ENCODE measurements at regions of chr1 and their contacts with region 1.

Region 1: DNA sequence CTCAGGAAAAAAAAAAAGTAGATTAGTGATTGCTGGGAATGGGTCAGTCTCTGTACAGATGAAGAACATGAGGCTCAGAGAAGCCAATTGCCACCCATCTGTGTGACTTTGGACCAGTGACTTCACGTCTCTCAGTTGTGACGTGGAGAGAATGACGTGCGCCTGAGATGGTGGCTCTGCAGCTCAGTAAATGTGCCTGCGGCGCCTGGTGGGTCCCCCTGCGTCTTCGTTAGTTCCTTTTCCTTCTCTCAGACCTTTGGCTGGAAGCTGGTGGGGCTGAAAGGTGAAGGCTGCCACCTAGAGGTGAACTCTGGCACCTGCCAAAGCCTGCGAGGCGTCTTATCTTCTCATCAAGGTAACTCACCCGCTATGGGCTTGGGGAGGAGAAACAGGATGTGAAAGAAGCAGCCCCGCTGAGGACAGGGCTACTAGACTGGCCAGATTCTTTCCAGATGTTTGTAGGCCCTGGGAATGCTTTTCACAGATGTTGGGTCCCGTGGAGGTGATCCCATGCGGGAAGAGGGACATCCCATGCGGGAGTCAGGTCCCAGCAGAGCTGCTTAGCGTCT is 8.7 kb upstream of the E2F2 start:
- DNase-seq: peak; percentile 84
- ATAC-seq: peak; percentile 92
- H3K4me3 Mint-ChIP-seq: peak overlapping the region; percentile 59
- H3K27ac Mint-ChIP-seq: peak overlapping the region; percentile 56
- H3K4me1 Mint-ChIP-seq: peaks cover 39% of the 10 kb centered on the region
- H3K27me3 Mint-ChIP-seq: no peaks in the 10 kb centered on the region
- CTCF ChIP-seq: peak; percentile 60

Region 2: DNA sequence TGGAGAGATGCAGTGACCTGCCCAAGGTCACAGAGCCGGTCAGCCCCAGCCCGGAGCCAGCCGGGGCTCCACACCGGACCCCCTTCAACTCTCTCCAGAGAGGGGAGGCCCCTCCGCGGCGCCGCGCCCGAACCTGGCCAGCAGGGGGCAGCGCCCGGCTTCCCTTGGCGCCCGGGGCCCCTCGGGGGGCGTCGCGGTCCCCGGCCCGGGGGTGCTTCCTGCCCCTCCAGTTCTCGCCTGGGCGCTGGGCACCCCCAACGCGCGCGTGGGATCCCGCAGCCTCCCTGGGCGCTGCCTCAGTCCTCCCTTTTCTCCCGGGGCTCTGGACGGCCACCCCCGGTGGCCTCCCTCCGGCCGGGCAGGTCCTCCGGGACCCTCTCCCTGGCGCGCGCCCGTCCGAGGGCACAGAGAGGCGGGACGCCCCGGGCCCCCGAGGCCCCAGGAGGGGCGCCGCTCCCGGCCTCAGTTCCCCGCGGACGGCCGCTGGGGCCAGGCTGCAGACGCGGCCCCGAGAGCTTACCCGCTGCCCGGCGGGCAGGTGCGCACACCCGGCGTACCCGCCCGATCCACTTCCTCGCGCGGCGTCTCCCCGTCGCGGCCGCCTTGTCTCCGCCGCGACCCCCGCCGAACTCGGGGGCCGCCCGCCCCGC is 322.9 kb before region 1 on chr1:
- CTCF ChIA-PET with region 1: no interaction called
- POLR2A ChIA-PET with region 1: no interaction called
- intact Hi-C with region 1: loop called (anchors 2 kb)
- DNase-seq: peak; percentile 41
- ATAC-seq: peak; percentile 21
- H3K4me3 Mint-ChIP-seq: no peak overlapping the region
- H3K27ac Mint-ChIP-seq: no peak overlapping the region
- H3K4me1 Mint-ChIP-seq: peaks cover 6% of the 10 kb centered on the region
- H3K27me3 Mint-ChIP-seq: peaks cover 66% of the 10 kb centered on the region
- CTCF ChIP-seq: no peak

Region 3: GRCh38 chr1:23367791-23368561 is 171.8 kb before region 1 on chr1:
- CTCF ChIA-PET with region 1: no interaction called
- POLR2A ChIA-PET with region 1: no interaction called
- intact Hi-C with region 1: loop called (anchors 2 kb)
- DNase-seq: peak; percentile 88
- ATAC-seq: peak; percentile 88
- H3K4me3 Mint-ChIP-seq: peak overlapping the region; percentile 97
- H3K27ac Mint-ChIP-seq: peak overlapping the region; percentile 97
- H3K4me1 Mint-ChIP-seq: peaks cover 26% of the 10 kb centered on the region
- H3K27me3 Mint-ChIP-seq: no peaks in the 10 kb centered on the region
- CTCF ChIP-seq: no peak

Region 4: GRCh38 chr1:23484253-23485001 is 55.4 kb before region 1 on chr1:
- CTCF ChIA-PET with region 1: interaction called, 3 read pairs
- POLR2A ChIA-PET with region 1: no interaction called
- intact Hi-C with region 1: loop called (anchors 1 kb)
- DNase-seq: peak; percentile 81
- ATAC-seq: peak; percentile 88
- H3K4me3 Mint-ChIP-seq: peak overlapping the region; percentile 91
- H3K27ac Mint-ChIP-seq: peak overlapping the region; percentile 75
- H3K4me1 Mint-ChIP-seq: peaks cover 33% of the 10 kb centered on the region
- H3K27me3 Mint-ChIP-seq: peaks cover 4% of the 10 kb centered on the region
- CTCF ChIP-seq: no peak

Region 5: DNA sequence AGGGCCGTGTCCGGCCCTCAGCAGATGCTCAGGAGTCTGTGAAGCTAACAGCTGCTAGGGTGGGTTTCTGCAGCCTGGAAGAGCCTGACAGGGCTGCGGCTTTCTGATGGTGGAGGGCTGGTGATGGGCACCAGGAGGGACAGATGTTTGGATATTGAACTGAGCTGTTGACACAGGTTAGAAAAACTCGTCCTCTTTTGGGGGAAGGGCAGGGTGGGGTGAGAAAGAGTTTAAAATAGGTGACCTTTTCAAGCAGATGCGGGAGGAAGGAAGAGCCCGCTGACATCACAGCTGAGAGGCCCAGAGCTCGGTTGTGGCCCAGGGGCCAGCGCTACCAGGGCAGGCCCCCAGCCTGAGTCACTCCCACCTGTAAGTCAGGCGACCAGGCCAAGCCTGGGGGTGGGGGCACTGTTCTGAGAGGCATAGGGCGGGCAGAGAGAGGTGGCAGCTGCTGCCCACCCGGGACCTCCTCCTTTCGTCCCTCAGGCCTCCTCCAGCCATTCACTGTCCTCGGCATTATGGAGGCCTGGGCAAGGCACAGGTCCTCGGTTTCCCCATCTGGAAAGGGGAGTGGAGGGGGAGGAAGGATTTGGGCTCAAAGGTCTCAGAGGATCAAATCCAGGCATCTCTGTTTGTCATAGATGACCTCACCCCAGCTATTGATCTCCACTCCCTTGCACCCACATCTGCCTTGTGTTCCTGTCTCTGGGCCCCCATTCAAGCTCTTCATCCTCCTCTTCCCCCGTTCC is 51.9 kb after region 1 on chr1:
- CTCF ChIA-PET with region 1: interaction called, 10 read pairs
- POLR2A ChIA-PET with region 1: interaction called, 7 read pairs
- intact Hi-C with region 1: no loop called
- DNase-seq: peak; percentile 67
- ATAC-seq: peak; percentile 80
- H3K4me3 Mint-ChIP-seq: peak overlapping the region; percentile 74
- H3K27ac Mint-ChIP-seq: peak overlapping the region; percentile 89
- H3K4me1 Mint-ChIP-seq: peaks cover 87% of the 10 kb centered on the region
- H3K27me3 Mint-ChIP-seq: no peaks in the 10 kb centered on the region
- CTCF ChIP-seq: no peak

Region 6: DNA sequence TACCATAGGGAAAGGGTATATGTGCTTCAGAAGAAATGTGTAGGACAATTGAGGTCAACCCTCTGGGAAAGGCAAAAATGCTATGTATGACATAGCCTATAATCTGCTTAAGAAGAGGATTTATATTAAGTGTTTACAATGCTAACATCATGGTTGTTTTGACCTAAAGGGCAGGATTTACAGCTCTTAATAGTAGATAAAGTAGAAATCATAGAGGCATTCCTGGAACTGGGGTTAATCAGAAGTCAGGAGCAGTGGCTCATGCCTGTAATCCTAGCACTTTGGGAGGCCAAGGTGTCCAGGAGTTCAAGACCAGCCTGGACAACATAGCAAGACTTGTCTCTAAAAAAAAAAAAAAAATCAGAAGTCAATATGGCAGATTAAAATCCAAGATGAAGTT is 143.2 kb after region 1 on chr1:
- CTCF ChIA-PET with region 1: no interaction called
- POLR2A ChIA-PET with region 1: no interaction called
- intact Hi-C with region 1: no loop called
- DNase-seq: no peak
- ATAC-seq: no peak
- H3K4me3 Mint-ChIP-seq: no peak overlapping the region
- H3K27ac Mint-ChIP-seq: no peak overlapping the region
- H3K4me1 Mint-ChIP-seq: peaks cover 2% of the 10 kb centered on the region
- H3K27me3 Mint-ChIP-seq: peaks cover 6% of the 10 kb centered on the region
- CTCF ChIP-seq: no peak

Region 7: GRCh38 chr1:23751050-23751814 is 211.4 kb after region 1 on chr1:
- CTCF ChIA-PET with region 1: interaction called, 7 read pairs
- POLR2A ChIA-PET with region 1: interaction called, 3 read pairs
- intact Hi-C with region 1: loop called (anchors 1 kb)
- DNase-seq: no peak
- ATAC-seq: peak; percentile 84
- H3K4me3 Mint-ChIP-seq: no peak overlapping the region
- H3K27ac Mint-ChIP-seq: peak overlapping the region; percentile 41
- H3K4me1 Mint-ChIP-seq: peaks cover 33% of the 10 kb centered on the region
- H3K27me3 Mint-ChIP-seq: no peaks in the 10 kb centered on the region
- CTCF ChIP-seq: peak; percentile 25

Region 8: DNA sequence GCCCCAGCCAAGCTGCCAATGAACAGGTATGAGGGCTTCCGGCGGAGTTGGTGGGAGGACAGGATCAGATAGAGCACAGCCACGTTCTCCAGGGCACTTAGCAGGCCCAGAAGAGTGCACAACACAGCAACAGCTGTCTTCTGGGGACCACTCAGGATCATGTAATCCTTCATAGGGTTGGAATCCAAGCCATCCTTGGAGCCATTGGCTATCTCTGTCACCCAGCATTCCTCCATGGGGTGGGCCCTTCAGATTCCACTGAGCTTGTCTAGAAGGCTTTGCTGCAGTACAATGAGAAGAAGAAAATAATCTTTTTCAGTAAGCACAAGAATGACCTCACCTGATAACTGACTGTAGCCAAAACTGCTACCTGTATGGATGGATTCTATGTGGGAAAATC is 335.6 kb after region 1 on chr1:
- CTCF ChIA-PET with region 1: no interaction called
- POLR2A ChIA-PET with region 1: no interaction called
- intact Hi-C with region 1: no loop called
- DNase-seq: no peak
- ATAC-seq: no peak
- H3K4me3 Mint-ChIP-seq: no peak overlapping the region
- H3K27ac Mint-ChIP-seq: no peak overlapping the region
- H3K4me1 Mint-ChIP-seq: peaks cover 10% of the 10 kb centered on the region
- H3K27me3 Mint-ChIP-seq: no peaks in the 10 kb centered on the region
- CTCF ChIP-seq: no peak